Naive thymus-derived CD4-positive, alpha-beta T cell (primary cell): ENCODE measurements at regions of chr6 and their contacts with region 1.

Region 1: DNA sequence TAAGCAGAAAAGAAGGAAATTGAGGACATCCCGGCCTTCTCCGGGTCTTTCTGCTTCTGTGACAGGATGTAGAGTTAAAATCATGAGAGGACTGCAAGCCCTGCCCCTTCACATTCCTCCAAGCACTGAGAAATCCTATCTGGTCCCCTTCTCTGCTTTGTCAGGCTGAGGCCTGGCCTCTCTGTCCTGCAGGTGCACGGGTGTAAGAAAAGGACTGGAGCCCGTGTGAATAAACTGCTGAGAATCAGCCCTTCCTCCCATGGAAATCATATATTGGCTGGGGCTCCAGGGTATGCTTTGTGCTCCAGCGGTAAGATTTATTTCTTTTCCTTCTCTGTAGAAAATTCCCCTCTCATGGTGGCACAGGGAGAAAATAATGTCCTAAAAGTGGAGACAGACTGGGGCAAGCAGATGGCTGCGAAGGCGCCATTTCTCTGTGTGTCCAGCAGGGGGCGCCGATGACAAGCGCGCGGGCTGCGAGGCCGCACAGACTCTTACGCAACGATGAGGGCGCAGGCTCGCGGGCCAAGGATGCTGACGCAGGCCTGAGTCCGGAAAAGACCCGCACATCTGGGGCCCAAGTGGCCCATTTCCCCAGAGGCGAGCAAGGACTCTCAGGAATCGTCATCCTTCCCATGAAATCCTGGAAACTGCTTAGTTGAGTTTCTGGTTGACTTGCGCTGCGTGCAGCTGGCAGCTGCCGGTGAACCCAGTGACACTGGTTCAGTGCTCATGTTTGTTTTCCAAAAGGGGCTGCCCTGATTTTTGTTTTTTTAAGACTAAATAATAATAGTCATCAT is 258.6 kb downstream of the ADGB start:
- DNase-seq: peak; percentile 31 to 80 (median 72)
- ATAC-seq: peak; percentile 96
- H3K4me3 ChIP-seq: no peak overlapping the region
- H3K4me3 Mint-ChIP-seq: peak overlapping the region in 6 of 10 donors; percentile 39 to 60 (median 52)
- H3K27ac ChIP-seq: no peak overlapping the region
- H3K27ac Mint-ChIP-seq: peak overlapping the region in 1 of 9 donors; percentile 56
- H3K4me1 ChIP-seq: no peaks in the 10 kb centered on the region
- H3K4me1 Mint-ChIP-seq: peaks cover 0 to 5% (median 4%) of the 10 kb centered on the region in 7 donors
- H3K27me3 ChIP-seq: no peaks in the 10 kb centered on the region
- H3K27me3 Mint-ChIP-seq: peaks cover 0 to 7% (median 0%) of the 10 kb centered on the region in 5 donors

Region 2: DNA sequence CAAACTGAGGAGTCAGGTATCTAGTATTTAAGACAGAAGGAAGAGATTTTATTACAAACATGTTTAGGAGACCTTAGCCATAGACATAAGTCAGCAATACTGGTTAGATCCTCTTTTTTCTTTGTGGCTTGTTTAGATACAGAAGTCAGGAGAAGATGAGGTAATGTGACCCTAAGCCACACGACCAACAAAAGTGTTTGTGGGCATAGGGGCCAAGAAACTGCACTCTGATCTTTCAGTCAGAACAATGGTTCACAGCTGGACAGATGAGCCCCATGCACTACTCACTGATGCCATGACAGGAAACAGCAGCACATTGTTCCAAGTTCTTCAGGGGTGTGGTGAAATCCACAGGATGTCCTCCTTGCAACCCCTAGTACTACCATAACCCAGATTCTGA is 552.3 kb before region 1 on chr6:
- CTCF ChIA-PET with region 1: no interaction called
- POLR2A ChIA-PET with region 1: no interaction called
- intact Hi-C with region 1: no loop called
- DNase-seq: no peak
- ATAC-seq: peak; percentile 34
- H3K4me3 ChIP-seq: no peak overlapping the region
- H3K4me3 Mint-ChIP-seq: no peak overlapping the region
- H3K27ac ChIP-seq: no peak overlapping the region
- H3K27ac Mint-ChIP-seq: no peak overlapping the region
- H3K4me1 ChIP-seq: no peaks in the 10 kb centered on the region
- H3K4me1 Mint-ChIP-seq: no peaks in the 10 kb centered on the region
- H3K27me3 ChIP-seq: no peaks in the 10 kb centered on the region
- H3K27me3 Mint-ChIP-seq: peaks cover 0 to 7% (median 4%) of the 10 kb centered on the region in 5 donors

Region 3: DNA sequence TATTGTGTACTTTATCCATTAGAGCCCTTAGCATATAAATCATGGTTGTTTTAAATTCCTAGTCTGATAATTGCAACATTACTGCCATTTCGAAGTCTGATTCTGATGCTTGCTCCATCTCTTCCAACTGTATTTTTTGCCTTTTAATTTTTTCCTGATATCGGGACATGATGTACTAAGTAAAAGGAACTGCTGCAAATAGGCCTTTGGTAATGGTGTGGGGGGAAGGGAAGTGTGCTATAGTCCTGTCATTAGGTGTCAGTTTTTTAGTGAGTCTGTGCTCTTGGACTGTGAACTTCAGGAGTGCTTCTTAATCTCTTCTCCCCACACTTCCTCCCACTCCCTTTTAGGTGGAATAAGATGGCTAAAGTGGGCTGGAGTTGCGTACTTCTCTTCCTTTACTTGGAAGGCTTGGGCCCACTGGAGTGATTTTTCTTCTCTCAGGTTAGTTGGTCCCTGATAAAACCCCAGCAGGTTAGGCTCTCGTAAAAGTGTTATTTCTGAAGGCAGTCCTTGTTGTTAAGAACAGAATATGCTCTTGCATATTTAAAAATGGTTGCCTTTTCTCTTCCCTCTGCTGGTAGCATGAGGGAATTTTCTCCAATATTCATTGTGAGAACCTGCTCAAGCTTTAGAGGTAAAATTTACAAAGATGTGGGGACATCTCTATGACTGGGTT is 364.9 kb after region 1 on chr6:
- CTCF ChIA-PET with region 1: no interaction called
- POLR2A ChIA-PET with region 1: no interaction called
- intact Hi-C with region 1: loop called (anchors 1 to 5 kb)
- DNase-seq: peak in 6 of 9 donors; percentile 21 to 45 (median 36)
- ATAC-seq: peak; percentile 61
- H3K4me3 ChIP-seq: no peak overlapping the region
- H3K4me3 Mint-ChIP-seq: peak overlapping the region in 2 of 10 donors; percentile 29 to 35
- H3K27ac ChIP-seq: no peak overlapping the region
- H3K27ac Mint-ChIP-seq: peak overlapping the region in 6 of 9 donors; percentile 11 to 64 (median 42)
- H3K4me1 ChIP-seq: peaks cover 0 to 5% of the 10 kb centered on the region in 2 donors
- H3K4me1 Mint-ChIP-seq: peaks cover 16 to 74% (median 65%) of the 10 kb centered on the region in 7 donors
- H3K27me3 ChIP-seq: no peaks in the 10 kb centered on the region
- H3K27me3 Mint-ChIP-seq: no peaks in the 10 kb centered on the region

Region 4: DNA sequence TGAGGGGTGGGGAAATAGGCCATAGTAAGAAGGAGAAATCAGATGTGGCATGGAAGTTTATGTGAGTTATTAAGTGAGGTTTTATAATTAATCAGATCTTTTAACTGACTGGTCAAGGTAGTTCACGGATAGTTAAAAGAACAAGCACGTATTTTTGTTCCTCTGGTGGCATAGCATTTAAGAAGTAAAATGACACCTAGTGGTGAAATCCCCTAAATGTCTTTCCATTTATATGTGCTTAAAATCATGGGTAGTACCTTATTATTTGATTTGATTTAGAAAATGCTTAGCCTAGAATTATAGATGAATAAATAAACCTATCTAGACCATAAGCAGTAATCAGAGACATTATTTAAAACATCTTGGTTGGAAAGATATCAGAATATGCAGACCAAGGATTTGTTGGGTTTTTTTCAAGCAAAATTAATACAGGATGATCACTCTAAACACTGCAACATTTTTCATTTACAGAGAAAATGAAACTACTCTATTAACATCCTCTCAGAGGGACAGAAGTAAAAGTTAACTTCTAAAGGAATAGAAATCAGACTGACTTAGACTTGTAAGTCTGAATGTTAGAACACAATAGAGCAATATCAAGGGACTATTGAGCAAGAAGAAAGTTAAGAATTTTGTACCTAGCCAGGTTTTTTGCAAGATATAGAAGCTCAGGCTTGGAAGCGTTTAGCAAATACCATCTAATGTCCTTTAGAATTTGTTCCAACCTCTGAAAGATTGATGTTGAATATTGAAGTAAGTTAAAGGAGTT is 427.9 kb after region 1 on chr6:
- CTCF ChIA-PET with region 1: interaction called, 5 read pairs
- POLR2A ChIA-PET with region 1: no interaction called
- intact Hi-C with region 1: loop called (anchors 1 kb)
- DNase-seq: peak in 5 of 9 donors; percentile 16 to 34 (median 21)
- ATAC-seq: peak; percentile 52
- H3K4me3 ChIP-seq: no peak overlapping the region
- H3K4me3 Mint-ChIP-seq: peak overlapping the region in 2 of 10 donors; percentile 6 to 38
- H3K27ac ChIP-seq: no peak overlapping the region
- H3K27ac Mint-ChIP-seq: peak overlapping the region in 5 of 9 donors; percentile 0 to 76 (median 11)
- H3K4me1 ChIP-seq: no peaks in the 10 kb centered on the region
- H3K4me1 Mint-ChIP-seq: peaks cover 9 to 32% (median 25%) of the 10 kb centered on the region in 7 donors
- H3K27me3 ChIP-seq: no peaks in the 10 kb centered on the region
- H3K27me3 Mint-ChIP-seq: no peaks in the 10 kb centered on the region

Region 5: DNA sequence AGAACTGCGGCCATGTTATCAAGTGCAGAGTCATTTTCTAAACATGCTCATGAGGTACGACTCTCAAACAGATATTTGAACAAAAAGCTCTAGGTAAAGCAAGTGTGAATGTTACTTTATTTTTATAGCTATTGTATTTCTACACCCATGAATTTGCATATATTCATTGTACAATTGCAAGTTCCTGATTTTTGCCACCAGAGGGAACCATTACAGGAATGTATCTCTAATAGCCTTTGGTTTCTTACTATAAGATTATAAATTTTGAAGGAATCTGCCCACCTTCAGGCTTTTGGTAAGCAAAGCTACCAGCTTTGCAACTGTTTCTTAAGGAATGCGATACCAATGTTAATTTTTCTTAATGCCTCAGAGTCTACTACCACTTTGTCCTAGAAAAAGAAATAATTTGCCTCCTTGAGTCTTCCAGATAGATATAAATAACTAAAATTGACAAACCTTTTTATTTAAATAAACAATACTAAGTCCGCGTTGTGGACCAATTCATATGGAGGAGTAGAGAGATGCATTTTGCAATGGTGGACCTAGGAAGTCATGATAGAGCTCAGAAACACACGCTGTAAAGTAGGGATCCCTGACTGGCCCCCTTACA is 525.7 kb after region 1 on chr6:
- CTCF ChIA-PET with region 1: interaction called, 4 read pairs
- POLR2A ChIA-PET with region 1: no interaction called
- intact Hi-C with region 1: loop called in 1 of 2 experiments (anchors 10 kb)
- DNase-seq: peak in 1 of 9 donors; percentile 5
- ATAC-seq: no peak
- H3K4me3 ChIP-seq: no peak overlapping the region
- H3K4me3 Mint-ChIP-seq: no peak overlapping the region
- H3K27ac ChIP-seq: no peak overlapping the region
- H3K27ac Mint-ChIP-seq: peak overlapping the region in 1 of 9 donors; percentile 59
- H3K4me1 ChIP-seq: no peaks in the 10 kb centered on the region
- H3K4me1 Mint-ChIP-seq: peaks cover 0 to 5% (median 0%) of the 10 kb centered on the region in 7 donors
- H3K27me3 ChIP-seq: no peaks in the 10 kb centered on the region
- H3K27me3 Mint-ChIP-seq: no peaks in the 10 kb centered on the region

Region 6: GRCh38 chr6:147651249-147652063 is 794.1 kb after region 1 on chr6:
- CTCF ChIA-PET with region 1: interaction called, 3 read pairs
- POLR2A ChIA-PET with region 1: no interaction called
- intact Hi-C with region 1: loop called in 1 of 2 experiments (anchors 2 kb)
- DNase-seq: no peak
- ATAC-seq: no peak
- H3K4me3 ChIP-seq: no peak overlapping the region
- H3K4me3 Mint-ChIP-seq: no peak overlapping the region
- H3K27ac ChIP-seq: no peak overlapping the region
- H3K27ac Mint-ChIP-seq: no peak overlapping the region
- H3K4me1 ChIP-seq: no peaks in the 10 kb centered on the region
- H3K4me1 Mint-ChIP-seq: no peaks in the 10 kb centered on the region
- H3K27me3 ChIP-seq: no peaks in the 10 kb centered on the region
- H3K27me3 Mint-ChIP-seq: peaks cover 0 to 14% (median 0%) of the 10 kb centered on the region in 5 donors

Region 7: DNA sequence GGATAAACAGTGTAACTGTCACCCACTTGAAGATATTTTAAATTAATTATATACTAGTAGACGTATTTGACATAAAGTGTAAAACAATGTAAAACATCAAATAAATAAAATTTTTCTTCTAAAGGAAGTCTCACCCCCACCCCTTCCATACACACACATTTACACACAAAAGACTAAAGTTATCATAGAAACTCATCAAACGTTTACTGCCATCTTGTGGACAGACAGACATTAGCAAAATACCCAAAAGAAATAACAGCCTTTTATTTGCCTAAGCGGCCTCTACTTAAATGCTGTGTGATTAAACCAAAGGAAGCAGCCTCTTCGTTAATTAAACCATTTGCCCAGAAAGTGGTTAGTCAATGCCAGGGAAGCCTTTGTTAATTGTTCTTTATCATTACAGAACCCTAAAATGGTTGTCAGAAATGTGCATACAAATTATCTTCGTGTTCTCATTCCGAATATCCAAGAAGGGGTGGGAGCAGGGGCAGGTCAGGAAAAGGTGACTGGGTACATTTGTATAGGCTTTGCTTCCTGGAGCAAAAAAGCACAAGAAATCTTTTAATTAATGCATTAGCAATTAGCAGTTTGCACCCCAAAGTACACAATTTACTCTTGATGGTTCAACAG is 1309.1 kb after region 1 on chr6:
- CTCF ChIA-PET with region 1: no interaction called
- POLR2A ChIA-PET with region 1: no interaction called
- intact Hi-C with region 1: loop called (anchors 1 to 5 kb)
- DNase-seq: peak in 5 of 9 donors; percentile 13 to 24 (median 16)
- ATAC-seq: no peak
- H3K4me3 ChIP-seq: no peak overlapping the region
- H3K4me3 Mint-ChIP-seq: no peak overlapping the region
- H3K27ac ChIP-seq: no peak overlapping the region
- H3K27ac Mint-ChIP-seq: no peak overlapping the region
- H3K4me1 ChIP-seq: no peaks in the 10 kb centered on the region
- H3K4me1 Mint-ChIP-seq: peaks cover 0 to 2% (median 0%) of the 10 kb centered on the region in 7 donors
- H3K27me3 ChIP-seq: no peaks in the 10 kb centered on the region
- H3K27me3 Mint-ChIP-seq: peaks cover 0 to 8% (median 4%) of the 10 kb centered on the region in 5 donors

Region 8: GRCh38 chr6:148250975-148251685 is 1393.8 kb after region 1 on chr6:
- CTCF ChIA-PET with region 1: no interaction called
- POLR2A ChIA-PET with region 1: no interaction called
- intact Hi-C with region 1: loop called in 1 of 2 experiments (anchors 1 kb)
- DNase-seq: peak in 4 of 9 donors; percentile 5 to 18 (median 15)
- ATAC-seq: no peak
- H3K4me3 ChIP-seq: no peak overlapping the region
- H3K4me3 Mint-ChIP-seq: no peak overlapping the region
- H3K27ac ChIP-seq: no peak overlapping the region
- H3K27ac Mint-ChIP-seq: no peak overlapping the region
- H3K4me1 ChIP-seq: no peaks in the 10 kb centered on the region
- H3K4me1 Mint-ChIP-seq: no peaks in the 10 kb centered on the region
- H3K27me3 ChIP-seq: no peaks in the 10 kb centered on the region
- H3K27me3 Mint-ChIP-seq: peaks cover 0 to 25% (median 7%) of the 10 kb centered on the region in 5 donors